ENCODE measurements at regions of chr13 and their contacts with region 1.

Region 1: GRCh38 chr13:73633817-73634460 is 500.3 kb downstream of the KLF12 start:
- DNase-seq: no peak
- ATAC-seq: no peak

Region 2: DNA sequence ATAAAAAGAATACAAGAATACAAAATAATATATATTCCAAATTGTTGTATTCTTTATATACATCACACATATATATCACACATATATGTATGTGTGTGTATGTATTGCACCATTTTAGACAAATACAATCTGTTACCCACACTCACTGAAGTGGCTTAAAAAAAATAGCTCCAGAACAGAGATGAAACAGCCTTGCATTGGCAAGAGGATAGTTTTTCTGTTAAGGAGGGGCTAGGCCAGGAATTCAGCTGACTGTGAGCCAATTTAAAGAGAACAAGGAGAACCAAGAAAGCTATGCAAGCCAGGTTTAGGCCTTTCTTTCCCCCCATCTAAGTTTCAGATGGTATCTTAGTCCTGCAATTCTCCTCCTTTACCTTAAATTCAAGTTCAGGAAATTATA is 1164.0 kb before region 1 on chr13:
- intact Hi-C with region 1: no loop called
- DNase-seq: no peak
- ATAC-seq: peak; percentile 62

Region 3: GRCh38 chr13:73583331-73583730 is 50.6 kb before region 1 on chr13:
- intact Hi-C with region 1: no loop called
- DNase-seq: no peak
- ATAC-seq: no peak

Region 4: DNA sequence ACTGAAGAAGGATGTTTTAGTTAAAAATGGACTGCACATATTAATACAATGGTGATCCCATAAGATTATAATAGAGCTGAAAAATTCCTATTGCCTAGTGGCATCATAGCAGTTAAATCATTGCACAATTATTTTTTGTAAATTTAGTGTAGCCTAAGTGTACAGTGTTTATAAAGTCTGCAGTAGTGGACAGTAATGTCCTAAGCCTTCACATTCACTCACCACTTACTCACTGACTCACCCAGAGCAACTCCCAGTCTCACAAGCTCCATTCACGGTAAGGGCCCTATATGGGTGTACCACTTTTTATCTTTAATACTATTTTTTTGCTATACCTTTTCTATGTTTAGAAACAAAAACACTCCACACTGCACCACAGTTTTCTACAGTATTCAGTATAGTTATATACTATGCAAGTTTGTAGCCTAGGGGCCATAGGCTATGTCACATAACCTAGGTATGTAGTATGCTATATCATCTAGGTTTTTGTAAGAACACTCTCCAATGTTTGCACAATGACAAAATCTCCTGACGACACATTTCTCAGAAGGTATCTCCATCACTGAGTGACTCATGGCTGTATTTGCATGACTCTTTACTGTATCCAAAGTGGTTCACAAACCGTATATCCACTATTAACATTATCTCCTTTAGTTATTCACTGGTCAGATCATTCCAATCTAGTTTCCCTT is 35.8 kb before region 1 on chr13:
- intact Hi-C with region 1: loop called (anchors 2 kb)
- DNase-seq: no peak
- ATAC-seq: no peak

Measured in sciatic nerve (tissue), 2 donors.